ENCODE measurements at regions of chr20 and their contacts with region 1.

Region 1: DNA sequence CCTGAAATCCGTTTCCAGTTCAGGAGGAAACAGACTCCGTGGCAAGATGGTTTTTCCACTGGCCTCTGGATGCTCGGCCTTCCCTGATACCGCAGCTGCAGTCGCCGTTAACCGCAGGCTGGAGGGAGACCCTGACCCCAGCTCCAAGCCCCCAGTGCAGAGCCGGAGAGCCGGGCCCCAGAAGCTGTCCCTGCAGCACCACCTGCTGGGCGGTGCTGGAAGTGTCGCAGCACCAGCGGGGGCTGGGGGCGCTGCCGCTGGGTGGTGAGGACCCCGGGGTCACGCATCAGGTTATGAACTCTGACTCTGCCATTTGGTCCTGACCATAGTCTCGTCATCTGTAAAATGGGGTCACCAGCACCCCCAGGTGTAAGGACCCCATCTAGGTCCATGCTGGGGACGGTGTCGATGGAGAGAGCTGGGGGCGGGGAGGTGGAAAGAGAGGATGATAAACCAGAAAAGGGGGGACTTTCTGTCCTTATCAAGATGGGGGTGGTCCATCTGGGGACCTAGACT is 20.7 kb upstream of the CHRNA4 start:
- DNase-seq: peak; percentile 47
- H3K4me3 Mint-ChIP-seq: no peak overlapping the region
- H3K27ac Mint-ChIP-seq: no peak overlapping the region
- H3K4me1 Mint-ChIP-seq: no peaks in the 10 kb centered on the region
- H3K27me3 Mint-ChIP-seq: peaks cover 29% of the 10 kb centered on the region

Region 2: DNA sequence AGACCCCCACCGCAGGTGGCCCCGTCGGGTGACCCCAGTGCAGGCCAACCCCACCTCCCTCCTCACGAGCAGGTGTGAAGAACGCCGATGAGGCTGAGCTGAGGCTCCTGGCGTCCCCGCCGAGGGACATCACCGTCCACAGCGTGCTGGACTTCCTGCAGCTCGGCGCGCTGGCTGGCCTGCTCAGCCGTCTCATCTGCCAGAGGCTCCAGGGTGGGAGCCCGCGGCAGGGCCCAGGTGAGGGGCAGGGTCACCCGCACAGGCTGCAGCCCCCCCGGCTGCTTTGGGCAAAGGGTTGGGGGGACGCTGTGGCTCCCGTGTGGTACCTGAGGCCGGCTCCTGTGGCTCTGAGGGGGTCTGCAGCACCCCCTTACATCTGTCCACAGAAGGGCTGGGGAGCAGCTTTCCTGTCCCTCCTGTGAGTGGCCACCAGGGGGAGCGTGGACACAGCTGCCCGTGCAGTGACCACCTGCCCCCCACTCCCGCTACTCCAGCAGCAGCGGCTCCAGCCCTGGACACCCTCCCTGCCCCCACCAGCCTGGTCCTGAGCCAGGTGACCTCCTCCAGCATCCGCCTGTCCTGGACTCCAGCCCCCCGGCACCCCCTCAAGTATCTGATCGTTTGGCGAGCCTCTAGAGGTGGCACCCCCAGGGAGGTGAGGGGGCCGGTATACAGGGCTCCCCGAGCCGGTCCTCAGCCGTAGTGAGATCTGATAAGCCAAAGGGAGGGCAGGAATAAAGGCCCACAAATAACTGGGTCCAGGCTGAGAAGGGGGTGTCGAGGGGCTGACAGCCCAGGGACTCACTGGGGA is 72.4 kb before region 1 on chr20:
- CTCF ChIA-PET with region 1: interaction called, 34 read pairs
- DNase-seq: peak; percentile 52
- H3K4me3 Mint-ChIP-seq: no peak overlapping the region
- H3K27ac Mint-ChIP-seq: no peak overlapping the region
- H3K4me1 Mint-ChIP-seq: no peaks in the 10 kb centered on the region
- H3K27me3 Mint-ChIP-seq: no peaks in the 10 kb centered on the region

Region 3: DNA sequence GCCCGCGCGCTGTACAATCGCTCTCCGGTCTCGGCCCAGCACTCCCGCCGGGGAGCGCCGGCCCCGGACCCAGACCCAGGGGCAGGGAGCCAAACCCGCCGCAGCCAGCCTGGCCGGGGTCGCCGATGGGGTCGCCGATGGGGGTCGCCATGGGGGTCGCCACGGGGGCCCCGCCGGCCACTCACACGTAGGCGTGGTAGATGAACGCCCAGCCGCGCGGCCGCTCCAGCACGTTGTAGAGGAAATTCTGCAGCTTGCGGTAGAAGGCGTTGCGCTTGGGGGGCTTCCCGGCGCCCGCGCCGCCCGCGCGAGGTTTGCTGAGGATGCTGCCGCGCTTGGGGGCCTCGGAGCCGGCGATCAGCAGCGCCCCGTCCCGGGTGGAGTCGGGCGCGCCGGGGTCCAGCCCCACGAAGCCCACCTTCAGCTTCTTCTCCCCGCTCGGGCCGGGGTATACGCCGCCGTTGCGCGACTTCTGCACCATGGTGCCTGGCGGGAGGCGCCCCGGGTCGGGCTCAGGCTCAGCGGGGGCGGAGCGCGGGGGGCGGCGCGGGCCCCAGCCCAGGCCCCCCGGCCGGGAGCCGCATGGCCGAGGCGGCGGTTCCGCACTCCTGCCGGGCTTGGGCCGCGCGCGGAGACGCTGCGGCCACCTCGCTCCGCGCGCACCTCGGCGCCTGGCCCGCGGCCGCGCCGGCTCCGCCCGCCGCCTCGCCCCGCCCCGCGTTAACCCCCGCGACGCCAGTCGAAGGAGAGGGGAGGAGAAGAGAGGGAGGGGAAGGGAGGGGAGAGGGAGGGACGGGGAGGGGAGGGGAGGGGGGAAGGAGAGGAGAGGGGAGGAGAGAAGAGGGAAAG is 90.3 kb after region 1 on chr20 and contains the start of gene KCNQ2:
- CTCF ChIA-PET with region 1: no interaction called
- DNase-seq: no peak
- H3K4me3 Mint-ChIP-seq: no peak within 1 kb of the TSS
- H3K27ac Mint-ChIP-seq: no peak within 1 kb of the TSS
- H3K4me1 Mint-ChIP-seq: no peaks in the 10 kb centered on the region
- H3K27me3 Mint-ChIP-seq: peaks cover 83% of the 10 kb centered on the region

Measured in activated naive CD4-positive, alpha-beta T cell treated with anti-CD3 and anti-CD28 coated beads, Interleukin-2, amount 10 ng/mL, durations not matched to agents 7 days and 5 days (primary cell).